CD8-positive, alpha-beta T cell (primary cell): ENCODE measurements at regions of chr15 and their contacts with region 1.

Region 1: GRCh38 chr15:45314960-45315359 is 62.9 kb downstream of the SLC28A2 start:
- DNase-seq: peak in 1 of 9 experiments; percentile 10
- ATAC-seq: no peak
- H3K4me3 ChIP-seq: no peak overlapping the region
- H3K4me3 Mint-ChIP-seq: no peak overlapping the region
- H3K27ac ChIP-seq: no peak overlapping the region
- H3K27ac Mint-ChIP-seq: no peak overlapping the region
- H3K4me1 ChIP-seq: no peaks in the 10 kb centered on the region
- H3K4me1 Mint-ChIP-seq: no peaks in the 10 kb centered on the region
- H3K27me3 ChIP-seq: no peaks in the 10 kb centered on the region
- H3K27me3 Mint-ChIP-seq: peaks cover 13% of the 10 kb centered on the region
- CTCF ChIP-seq: no peak

Region 2: DNA sequence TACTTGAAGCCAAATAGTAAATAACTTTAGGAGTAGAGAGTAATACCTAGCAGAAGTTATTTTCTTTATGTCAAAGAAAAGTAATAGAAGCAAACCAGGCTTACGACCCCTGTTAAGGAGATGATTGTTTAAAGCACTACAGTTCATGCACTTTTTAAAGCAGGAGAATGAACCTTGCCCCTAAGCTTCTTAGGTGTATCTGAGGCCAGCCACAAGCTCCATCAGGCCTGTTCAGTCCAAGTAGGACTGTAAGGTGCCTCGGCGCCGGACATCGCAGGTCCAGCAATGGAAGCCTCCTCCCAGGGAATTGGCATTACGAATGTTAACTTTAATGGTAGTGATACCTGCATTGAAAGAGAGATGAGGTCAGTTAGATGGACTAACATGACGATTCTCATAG is 46.9 kb after region 1 on chr15:
- CTCF ChIA-PET with region 1: no interaction called
- POLR2A ChIA-PET with region 1: no interaction called
- intact Hi-C with region 1: loop called in 1 of 2 experiments (anchors 5 kb)
- DNase-seq: no peak
- ATAC-seq: no peak
- H3K4me3 ChIP-seq: no peak overlapping the region
- H3K4me3 Mint-ChIP-seq: no peak overlapping the region
- H3K27ac ChIP-seq: no peak overlapping the region
- H3K27ac Mint-ChIP-seq: no peak overlapping the region
- H3K4me1 ChIP-seq: no peaks in the 10 kb centered on the region
- H3K4me1 Mint-ChIP-seq: no peaks in the 10 kb centered on the region
- H3K27me3 ChIP-seq: no peaks in the 10 kb centered on the region
- H3K27me3 Mint-ChIP-seq: no peaks in the 10 kb centered on the region
- CTCF ChIP-seq: no peak